Heart right ventricle (tissue), 16 donors: ENCODE measurements at regions of chr12 and their contacts with region 1.

Region 1: DNA sequence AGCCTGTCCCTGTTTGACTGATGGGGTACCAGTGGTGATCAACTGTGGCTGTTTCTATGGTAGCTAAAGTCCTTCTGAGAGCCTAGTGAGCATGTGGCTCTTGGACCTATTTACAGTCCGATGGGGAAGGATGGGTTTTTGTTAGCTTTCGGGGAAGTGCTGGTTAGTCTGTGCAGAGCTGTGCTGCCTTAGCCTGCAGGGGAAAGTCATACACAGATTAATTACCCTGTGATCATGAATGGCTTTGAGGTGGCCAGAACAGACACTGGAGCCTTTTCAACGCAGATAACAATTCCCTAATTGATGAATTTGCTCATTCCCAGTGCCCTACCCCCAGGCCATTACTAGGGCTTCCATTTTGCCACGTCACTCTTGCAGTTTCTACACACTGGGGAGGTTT is 99.7 kb downstream of the WSCD2 start:
- DNase-seq: no peak
- ATAC-seq: no peak
- H3K4me3 ChIP-seq: no peak overlapping the region
- H3K27ac ChIP-seq: no peak overlapping the region
- H3K4me1 ChIP-seq: no peaks in the 10 kb centered on the region
- H3K27me3 ChIP-seq: peaks cover 0 to 18% (median 5%) of the 10 kb centered on the region in 7 donors
- CTCF ChIP-seq: no peak

Region 2: GRCh38 chr12:107702106-107702505 is 526.6 kb before region 1 on chr12:
- intact Hi-C with region 1: no loop called
- DNase-seq: no peak
- ATAC-seq: no peak
- H3K4me3 ChIP-seq: no peak overlapping the region
- H3K27ac ChIP-seq: peak overlapping the region in 1 of 10 donors; percentile 28
- H3K4me1 ChIP-seq: peaks cover 0 to 8% (median 0%) of the 10 kb centered on the region in 9 donors
- H3K27me3 ChIP-seq: no peaks in the 10 kb centered on the region
- CTCF ChIP-seq: no peak

Region 3: GRCh38 chr12:108465417-108465816 is 236.7 kb after region 1 on chr12:
- intact Hi-C with region 1: no loop called
- DNase-seq: no peak
- ATAC-seq: no peak
- H3K4me3 ChIP-seq: no peak overlapping the region
- H3K27ac ChIP-seq: no peak overlapping the region
- H3K4me1 ChIP-seq: no peaks in the 10 kb centered on the region
- H3K27me3 ChIP-seq: peaks cover 0 to 55% (median 33%) of the 10 kb centered on the region in 7 donors
- CTCF ChIP-seq: no peak

Region 4: GRCh38 chr12:108495054-108495453 is 266.3 kb after region 1 on chr12:
- intact Hi-C with region 1: loop called in 1 of 10 experiments (anchors 10 kb)
- DNase-seq: no peak
- ATAC-seq: no peak
- H3K4me3 ChIP-seq: no peak overlapping the region
- H3K27ac ChIP-seq: no peak overlapping the region
- H3K4me1 ChIP-seq: no peaks in the 10 kb centered on the region
- H3K27me3 ChIP-seq: peaks cover 0 to 51% (median 21%) of the 10 kb centered on the region in 7 donors
- CTCF ChIP-seq: peak in 8 of 9 donors; percentile 23 to 62 (median 46)